Head of caudate nucleus (tissue), 42 donors: ENCODE measurements at regions of chr12 and their contacts with region 1.

Region 1: GRCh38 chr12:123983822-123984485 is 10.9 kb downstream of the ZNF664 start:
- DNase-seq: peak in 39 of 42 donors; percentile 35 to 85 (median 64)

Region 2: DNA sequence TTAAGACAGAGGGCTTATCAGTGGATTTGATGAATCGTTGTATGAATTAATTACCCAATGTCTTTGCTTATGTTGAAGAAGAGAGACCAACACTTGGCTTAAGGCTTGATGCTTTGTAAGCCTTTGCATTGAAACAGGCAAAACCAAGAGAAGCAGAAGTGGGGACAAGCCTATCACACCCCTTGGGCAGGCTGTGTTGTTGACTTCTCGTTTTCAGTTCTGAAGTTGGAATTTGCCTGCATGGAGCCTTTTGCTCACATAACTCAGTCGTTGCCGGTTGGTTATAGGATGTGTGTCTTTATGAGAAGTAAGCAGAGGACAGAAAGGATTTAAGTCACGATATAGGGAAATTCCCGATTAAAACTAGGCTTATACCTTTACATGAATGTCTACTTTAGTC is 106.0 kb before region 1 on chr12:
- intact Hi-C with region 1: no loop called
- DNase-seq: no peak

Region 3: GRCh38 chr12:123891516-123892179 is 92.3 kb before region 1 on chr12:
- intact Hi-C with region 1: no loop called
- DNase-seq: peak in 1 of 42 donors; percentile 30

Region 4: GRCh38 chr12:123905319-123905925 is 78.5 kb before region 1 on chr12:
- intact Hi-C with region 1: loop called (anchors 10 kb)
- DNase-seq: peak in 40 of 42 donors; percentile 13 to 86 (median 66)